AG04449 (cell line): ENCODE measurements at regions of chr4 and their contacts with region 1.

Region 1: GRCh38 chr4:53015681-53016080 is 153.6 kb downstream of the RASL11B start:
- DNase-seq: no peak
- H3K4me3 ChIP-seq: no peak overlapping the region
- CTCF ChIP-seq: peak; percentile 54

Region 2: DNA sequence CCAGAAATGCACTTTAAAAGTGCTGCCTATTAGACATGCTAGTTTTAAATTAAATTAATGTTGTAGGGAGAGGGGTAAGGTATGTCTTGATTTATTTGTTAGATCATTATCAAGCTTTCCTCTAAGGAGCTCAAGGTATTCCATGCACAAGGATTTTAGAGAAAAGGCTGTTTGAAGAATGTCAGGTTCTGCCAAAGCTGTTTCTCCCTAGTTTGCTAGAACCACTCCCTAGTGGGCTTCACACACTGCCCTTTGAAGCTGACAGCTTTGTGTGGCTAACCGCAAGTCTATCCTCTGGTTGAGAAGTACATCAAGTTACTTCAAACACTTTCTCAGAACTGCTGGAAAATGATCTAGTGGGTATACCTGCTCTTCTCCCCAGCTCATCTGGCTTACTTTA is 121.2 kb before region 1 on chr4:
- CTCF ChIA-PET with region 1: no interaction called
- POLR2A ChIA-PET with region 1: no interaction called
- DNase-seq: no peak
- H3K4me3 ChIP-seq: no peak overlapping the region
- CTCF ChIP-seq: no peak

Region 3: DNA sequence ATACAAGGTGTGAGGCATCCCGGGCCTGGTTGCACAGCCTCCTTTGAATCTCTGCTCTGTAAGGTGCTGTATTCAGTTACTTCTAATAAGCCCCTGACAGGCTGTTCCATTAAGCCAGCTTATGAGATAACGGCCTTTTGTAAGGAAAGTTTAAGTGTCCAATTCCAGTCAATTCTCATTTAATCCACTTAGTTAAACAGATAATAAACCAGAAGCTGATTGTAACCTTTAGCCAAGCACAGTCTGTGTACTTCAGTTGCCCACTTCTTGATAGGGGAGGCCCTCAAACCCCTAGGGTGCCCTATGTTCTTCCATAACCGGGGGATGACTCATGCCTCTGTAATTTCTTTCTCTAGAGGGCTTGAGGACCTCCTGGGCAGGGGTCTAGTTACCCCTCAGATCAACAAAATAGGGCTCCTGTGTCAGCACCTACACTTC is 90.1 kb before region 1 on chr4:
- CTCF ChIA-PET with region 1: no interaction called
- POLR2A ChIA-PET with region 1: no interaction called
- DNase-seq: no peak
- H3K4me3 ChIP-seq: no peak overlapping the region
- CTCF ChIP-seq: no peak

Region 4: DNA sequence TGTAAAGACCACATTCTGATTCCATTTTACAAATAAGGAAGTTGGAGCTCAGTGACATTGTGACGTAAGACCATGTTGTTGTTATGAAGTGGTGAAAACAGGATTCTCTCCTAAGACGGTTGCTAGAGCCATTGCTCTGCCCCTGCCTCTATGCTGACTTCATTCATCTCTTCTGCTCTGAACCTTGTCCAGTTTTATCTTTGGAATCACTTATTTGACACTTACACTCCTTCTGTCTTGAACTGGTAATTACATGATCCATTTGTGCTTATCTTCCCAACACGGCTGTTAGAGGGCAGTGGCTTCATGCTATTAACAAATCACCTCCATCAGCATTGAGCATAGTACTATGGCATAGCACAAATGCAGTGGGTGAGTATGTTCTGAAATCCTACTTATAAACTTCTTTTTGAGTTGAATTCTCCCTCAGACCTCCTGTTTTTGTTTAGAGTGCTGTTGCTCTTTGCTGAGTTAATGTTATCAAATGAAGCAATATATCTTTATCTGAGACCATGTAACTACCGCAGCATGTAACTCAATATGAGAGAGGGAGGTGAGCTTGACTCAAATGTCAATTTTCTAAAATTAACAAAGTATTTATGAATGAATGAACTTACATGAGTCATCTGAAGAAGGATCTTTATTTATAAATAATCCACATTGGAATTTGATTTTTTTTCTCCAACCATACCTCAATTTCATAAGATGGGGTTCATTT is 24.2 kb after region 1 on chr4:
- CTCF ChIA-PET with region 1: interaction called, 15 read pairs
- POLR2A ChIA-PET with region 1: no interaction called
- DNase-seq: no peak
- H3K4me3 ChIP-seq: no peak overlapping the region
- CTCF ChIP-seq: no peak

Region 5: DNA sequence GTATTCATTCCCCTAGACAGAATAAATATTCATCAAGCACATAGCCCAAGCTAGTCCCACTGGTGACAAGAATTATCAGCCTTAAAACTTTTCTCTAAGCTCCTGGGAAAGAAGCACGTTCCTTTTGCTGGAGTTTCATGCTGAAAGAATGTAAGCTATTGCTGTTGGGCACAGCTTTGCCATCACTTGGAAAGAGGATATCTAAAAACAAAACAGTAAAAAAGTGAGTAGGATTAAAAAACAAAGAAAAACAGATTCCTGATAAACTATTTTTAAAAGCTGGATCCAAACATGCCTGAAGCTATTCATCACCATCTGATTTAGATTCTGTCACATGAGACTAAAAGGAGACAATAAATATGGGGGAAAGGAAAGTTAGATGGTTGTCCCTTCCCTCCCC is 173.3 kb after region 1 on chr4:
- CTCF ChIA-PET with region 1: interaction called, 35 read pairs
- POLR2A ChIA-PET with region 1: no interaction called
- DNase-seq: peak; percentile 67
- H3K4me3 ChIP-seq: no peak overlapping the region
- CTCF ChIP-seq: no peak

Region 6: DNA sequence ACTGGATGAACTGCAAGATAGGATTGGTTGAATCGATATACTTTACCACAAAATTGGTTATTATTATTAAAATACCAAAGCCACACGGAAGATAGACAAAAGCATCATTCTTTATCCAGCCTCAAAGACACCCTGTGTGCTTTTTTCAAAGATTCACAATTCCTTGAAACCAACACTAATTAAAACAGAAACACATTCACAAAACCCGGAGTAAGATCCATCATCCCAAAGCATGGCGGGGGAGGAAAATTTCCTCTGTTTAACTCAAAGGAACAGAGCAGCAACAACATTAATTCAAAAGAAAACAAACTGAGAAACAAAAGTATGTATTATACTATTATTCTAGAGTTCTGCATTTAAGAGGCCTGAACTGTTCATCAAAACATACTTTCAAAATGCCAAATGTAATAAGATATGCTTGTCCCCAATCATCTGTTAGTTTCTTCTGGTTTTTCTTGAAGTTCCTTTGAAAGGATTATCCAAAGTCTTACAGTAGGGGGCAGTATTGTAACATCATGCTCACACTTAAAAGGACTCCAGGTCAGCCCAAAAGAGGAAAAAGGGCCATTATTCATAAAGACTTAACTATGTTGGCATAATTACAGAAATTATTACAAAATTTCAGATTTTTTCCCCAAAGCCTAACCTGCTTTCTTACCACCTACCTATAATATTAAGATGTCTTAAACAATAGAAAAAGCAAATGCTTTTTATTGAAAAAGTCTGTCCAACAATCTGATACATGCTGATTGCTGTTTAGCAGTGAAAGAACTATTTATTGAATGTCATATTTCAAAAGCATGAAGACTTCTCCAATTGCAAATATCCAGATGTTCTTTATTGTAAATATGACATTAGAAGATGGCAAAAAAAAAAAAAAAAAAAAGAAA is 181.4 kb after region 1 on chr4:
- CTCF ChIA-PET with region 1: interaction called, 35 read pairs
- POLR2A ChIA-PET with region 1: no interaction called
- DNase-seq: peak; percentile 56
- H3K4me3 ChIP-seq: peak overlapping the region; percentile 37
- CTCF ChIP-seq: peak; percentile 48

Region 7: DNA sequence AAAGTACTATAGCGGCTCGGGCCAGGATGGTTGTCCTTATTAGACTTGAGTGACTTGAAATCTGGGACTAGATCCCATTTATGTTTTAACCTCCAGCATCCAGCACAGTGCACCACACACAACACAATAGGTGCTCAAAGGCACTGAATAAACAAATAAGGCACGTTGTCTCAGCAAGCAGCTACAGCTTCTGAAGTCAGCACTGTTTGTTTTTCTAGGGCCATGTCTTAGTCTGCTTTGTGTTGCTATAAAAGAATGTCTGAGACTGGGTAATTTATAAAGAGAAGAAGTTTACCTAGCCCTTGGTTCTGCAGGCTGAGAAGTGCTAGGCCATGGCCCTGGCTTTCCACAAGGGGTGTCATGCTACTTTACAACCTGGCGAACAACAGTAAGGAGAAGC is 677.7 kb after region 1 on chr4:
- CTCF ChIA-PET with region 1: no interaction called
- POLR2A ChIA-PET with region 1: no interaction called
- DNase-seq: no peak
- H3K4me3 ChIP-seq: no peak overlapping the region
- CTCF ChIP-seq: no peak